BJ (cell line): ENCODE measurements at regions of chr12 and their contacts with region 1.

Region 1: GRCh38 chr12:53047221-53048042 is 2.4 kb upstream of the TNS2 start:
- DNase-seq: no peak
- H3K4me3 ChIP-seq: peak overlapping the region; percentile 38
- H3K27me3 ChIP-seq: no peaks in the 10 kb centered on the region
- CTCF ChIP-seq: 0 out of 2 replicates have a peak, but pooled peaks have one; percentile 2

Region 2: DNA sequence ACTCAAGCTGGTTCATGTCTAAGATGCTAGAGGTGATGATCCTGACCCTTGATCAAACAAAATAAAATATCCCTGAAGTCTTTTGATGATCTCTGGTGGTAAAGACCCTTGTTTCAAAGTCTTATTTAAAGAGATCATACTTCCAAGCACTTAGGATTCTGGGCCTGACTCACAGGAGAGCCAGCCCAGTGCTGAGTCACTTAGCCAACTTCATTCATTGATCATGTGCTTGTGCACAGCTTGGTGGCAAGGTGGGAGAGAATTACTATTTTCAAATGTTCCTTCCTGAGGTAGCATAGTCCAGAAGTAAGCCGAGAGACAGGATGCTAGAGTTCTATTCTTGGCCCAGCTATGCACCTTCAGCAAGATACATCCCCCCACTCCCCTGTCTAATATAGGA is 1415.8 kb before region 1 on chr12:
- CTCF ChIA-PET with region 1: no interaction called
- POLR2A ChIA-PET with region 1: no interaction called
- DNase-seq: no peak
- H3K4me3 ChIP-seq: no peak overlapping the region
- H3K27me3 ChIP-seq: no peaks in the 10 kb centered on the region
- CTCF ChIP-seq: no peak

Region 3: GRCh38 chr12:53005986-53006809 is 41.2 kb before region 1 on chr12 and contains the start of gene EIF4B:
- CTCF ChIA-PET with region 1: interaction called, 11 read pairs
- POLR2A ChIA-PET with region 1: interaction called, 17 read pairs
- DNase-seq: peak; percentile 97
- H3K4me3 ChIP-seq: peak within 1 kb of the TSS; percentile 99
- H3K27me3 ChIP-seq: no peaks in the 10 kb centered on the region
- CTCF ChIP-seq: no peak
- polyA plus RNA-seq, gene EIF4B: 296 and 496 TPM in 2 replicates

Region 4: GRCh38 chr12:53011887-53012286 is 35.5 kb before region 1 on chr12:
- CTCF ChIA-PET with region 1: interaction called, 11 read pairs
- POLR2A ChIA-PET with region 1: no interaction called
- DNase-seq: no peak
- H3K4me3 ChIP-seq: no peak overlapping the region
- H3K27me3 ChIP-seq: no peaks in the 10 kb centered on the region
- CTCF ChIP-seq: no peak

Region 5: DNA sequence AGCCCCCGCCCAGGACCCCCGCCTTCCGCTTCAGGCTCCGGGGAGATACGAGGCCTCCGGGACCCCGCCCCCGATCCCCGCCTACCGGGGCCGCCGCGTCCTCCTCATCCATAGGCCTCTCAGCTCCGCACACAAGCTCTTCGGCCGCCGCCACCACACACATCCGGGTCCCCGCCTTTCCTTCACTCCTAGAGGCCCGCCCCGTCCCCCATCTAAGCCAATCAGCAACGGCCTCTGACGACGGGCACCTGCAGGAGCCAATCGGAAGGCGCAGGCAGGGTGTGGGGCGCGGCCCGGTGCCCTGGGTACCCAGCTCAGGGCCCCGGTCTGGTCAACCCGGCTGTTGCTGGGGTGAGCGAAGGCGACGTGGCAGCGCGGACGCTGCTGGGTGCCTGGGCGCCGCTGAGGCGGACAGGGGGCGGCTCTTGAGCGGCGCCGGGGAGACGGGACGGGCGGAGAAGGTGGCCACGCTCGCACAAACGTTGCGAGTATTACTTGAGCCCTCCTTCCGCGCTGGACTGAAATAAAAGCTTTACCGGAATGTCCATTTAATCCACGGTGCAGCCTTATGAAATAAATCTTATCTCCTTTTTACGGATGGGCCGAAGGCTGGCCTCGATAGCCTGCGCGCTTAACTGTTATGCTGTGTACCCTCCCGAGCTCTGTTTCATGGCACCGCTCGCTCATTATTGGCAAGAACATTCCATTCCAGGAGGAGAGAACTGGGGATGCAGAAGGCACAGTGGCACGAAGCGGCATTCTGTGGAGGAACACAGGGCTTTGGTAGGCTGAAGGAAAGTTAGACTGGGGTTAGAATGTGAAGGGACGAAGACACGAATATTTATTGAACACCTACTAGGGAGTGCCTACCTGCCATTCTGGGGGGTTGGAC is 32.0 kb after region 1 on chr12 and contains the start of gene SPRYD3:
- CTCF ChIA-PET with region 1: interaction called, 285 read pairs
- POLR2A ChIA-PET with region 1: interaction called, 14 read pairs
- DNase-seq: peak; percentile 84
- H3K4me3 ChIP-seq: peak within 1 kb of the TSS; percentile 74
- H3K27me3 ChIP-seq: no peaks in the 10 kb centered on the region
- CTCF ChIP-seq: no peak
- polyA plus RNA-seq, gene SPRYD3: 34.8 and 48.0 TPM in 2 replicates